GM12878 (cell line): ENCODE measurements at regions of chr14 and their contacts with region 1.

Region 1: GRCh38 chr14:69605738-69606137 is 5.7 kb upstream of the SUSD6 start:
- DNase-seq: no peak
- ATAC-seq: peak; percentile 41
- H3K4me3 ChIP-seq: no peak overlapping the region
- H3K27ac ChIP-seq: no peak overlapping the region
- H3K4me1 ChIP-seq: peaks cover 8% of the 10 kb centered on the region
- H3K27me3 ChIP-seq: no peaks in the 10 kb centered on the region
- CTCF ChIP-seq: no peak
- EP300 ChIP-seq: no peak
- POLR2A ChIP-seq: no peak
- RAD21 ChIP-seq: no peak

Region 2: GRCh38 chr14:69586404-69586803 is 19.3 kb before region 1 on chr14:
- CTCF ChIA-PET with region 1: interaction called, 21 read pairs
- POLR2A ChIA-PET with region 1: no interaction called
- RAD21 ChIA-PET with region 1: no interaction called
- SMC1A ChIA-PET with region 1: interaction called, 6 read pairs
- in situ Hi-C with region 1: no loop called
- intact Hi-C with region 1: loop called (anchors 1 kb)
- DNase-seq: no peak
- ATAC-seq: no peak
- H3K4me3 ChIP-seq: no peak overlapping the region
- H3K27ac ChIP-seq: no peak overlapping the region
- H3K4me1 ChIP-seq: no peaks in the 10 kb centered on the region
- H3K27me3 ChIP-seq: no peaks in the 10 kb centered on the region
- CTCF ChIP-seq: no peak
- EP300 ChIP-seq: no peak
- POLR2A ChIP-seq: no peak
- RAD21 ChIP-seq: no peak

Region 3: GRCh38 chr14:69708586-69709174 is 102.9 kb after region 1 on chr14:
- CTCF ChIA-PET with region 1: interaction called, 12 read pairs
- POLR2A ChIA-PET with region 1: interaction called, 5 read pairs
- RAD21 ChIA-PET with region 1: interaction called, 14 read pairs
- SMC1A ChIA-PET with region 1: interaction called, 46 read pairs
- in situ Hi-C with region 1: no loop called
- intact Hi-C with region 1: no loop called
- DNase-seq: no peak
- ATAC-seq: peak; percentile 89
- H3K4me3 ChIP-seq: no peak overlapping the region
- H3K27ac ChIP-seq: no peak overlapping the region
- H3K4me1 ChIP-seq: peaks cover 9% of the 10 kb centered on the region
- H3K27me3 ChIP-seq: no peaks in the 10 kb centered on the region
- CTCF ChIP-seq: peak; percentile 20 to 44 (median 30); a peak in 3 of 6 replicates
- EP300 ChIP-seq: no peak
- POLR2A ChIP-seq: no peak
- RAD21 ChIP-seq: peak; percentile 41; the same call in 1 of the 2 replicates